Heart right ventricle (tissue), 16 donors: ENCODE measurements at regions of chr2 and their contacts with region 1.

Region 1: GRCh38 chr2:17672583-17673317 is 80.9 kb downstream of the SMC6 start:
- DNase-seq: no peak
- ATAC-seq: no peak
- H3K4me3 ChIP-seq: no peak overlapping the region
- H3K27ac ChIP-seq: no peak overlapping the region
- H3K4me1 ChIP-seq: no peaks in the 10 kb centered on the region
- H3K27me3 ChIP-seq: no peaks in the 10 kb centered on the region
- CTCF ChIP-seq: no peak

Region 2: GRCh38 chr2:16773080-16773713 is 899.6 kb before region 1 on chr2:
- intact Hi-C with region 1: loop called (anchors 2 to 10 kb)
- DNase-seq: peak in 1 of 2 donors; percentile 23
- ATAC-seq: peak in 4 of 8 donors; percentile 46 to 80 (median 56)
- H3K4me3 ChIP-seq: no peak overlapping the region
- H3K27ac ChIP-seq: no peak overlapping the region
- H3K4me1 ChIP-seq: no peaks in the 10 kb centered on the region
- H3K27me3 ChIP-seq: peaks cover 0 to 22% (median 0%) of the 10 kb centered on the region in 7 donors
- CTCF ChIP-seq: peak; percentile 28 to 67 (median 58)

Region 3: DNA sequence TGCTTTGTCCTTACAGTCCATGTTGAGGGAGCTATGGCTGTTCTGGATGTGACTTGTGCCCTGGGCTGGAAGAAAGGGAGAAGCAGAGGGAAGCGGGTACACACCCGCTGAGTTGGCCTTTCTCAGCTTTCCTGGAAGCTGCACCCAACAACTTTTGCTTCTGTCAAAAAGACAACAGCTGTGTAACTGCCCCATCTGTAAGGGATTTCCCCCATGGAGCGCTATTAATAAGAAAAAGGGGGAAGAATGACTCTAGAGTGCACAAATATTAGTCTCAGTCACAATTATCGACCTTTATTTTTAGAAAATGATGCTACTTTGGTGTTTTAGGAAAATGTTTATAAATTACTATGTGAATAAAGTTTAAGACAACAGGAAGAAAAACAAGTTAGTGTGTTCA is 522.8 kb before region 1 on chr2:
- intact Hi-C with region 1: loop called in 1 of 10 experiments (anchors 10 kb)
- DNase-seq: no peak
- ATAC-seq: no peak
- H3K4me3 ChIP-seq: no peak overlapping the region
- H3K27ac ChIP-seq: no peak overlapping the region
- H3K4me1 ChIP-seq: no peaks in the 10 kb centered on the region
- H3K27me3 ChIP-seq: peaks cover 0 to 3% (median 0%) of the 10 kb centered on the region in 7 donors
- CTCF ChIP-seq: no peak

Region 4: GRCh38 chr2:17309741-17310339 is 362.9 kb before region 1 on chr2:
- intact Hi-C with region 1: loop called in 1 of 10 experiments (anchors 10 kb)
- DNase-seq: peak in 1 of 2 donors; percentile 23
- ATAC-seq: peak in 2 of 8 donors; percentile 69 to 71
- H3K4me3 ChIP-seq: no peak overlapping the region
- H3K27ac ChIP-seq: no peak overlapping the region
- H3K4me1 ChIP-seq: peaks cover 0 to 3% (median 0%) of the 10 kb centered on the region in 9 donors
- H3K27me3 ChIP-seq: no peaks in the 10 kb centered on the region
- CTCF ChIP-seq: peak; percentile 28 to 75 (median 67)

Region 5: GRCh38 chr2:17470855-17471641 is 201.7 kb before region 1 on chr2:
- intact Hi-C with region 1: loop called in 2 of 10 experiments (anchors 10 kb)
- DNase-seq: no peak
- ATAC-seq: no peak
- H3K4me3 ChIP-seq: no peak overlapping the region
- H3K27ac ChIP-seq: no peak overlapping the region
- H3K4me1 ChIP-seq: peaks cover 0 to under 1% (median 0%) of the 10 kb centered on the region in 9 donors
- H3K27me3 ChIP-seq: no peaks in the 10 kb centered on the region
- CTCF ChIP-seq: peak in 4 of 9 donors; percentile 13 to 33 (median 18)

Region 6: DNA sequence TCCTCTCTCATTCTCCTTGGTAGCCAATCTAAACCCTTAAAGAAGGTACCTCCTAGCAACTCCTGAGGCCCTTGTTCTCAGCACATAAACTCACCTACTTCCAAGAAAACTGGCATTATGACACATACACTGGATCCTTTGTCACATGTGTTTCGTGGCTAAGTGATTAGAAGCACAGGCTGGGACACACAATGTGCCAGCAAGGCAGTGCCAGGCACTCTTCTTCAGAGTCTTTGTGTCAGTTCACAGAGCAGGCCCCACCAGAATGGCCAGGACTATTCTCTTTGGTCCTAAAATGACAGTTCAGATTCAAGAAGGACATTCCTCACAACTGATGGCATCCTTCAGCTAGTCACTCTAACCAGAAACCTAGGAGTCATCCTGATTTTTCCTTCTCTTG is 40.5 kb after region 1 on chr2:
- intact Hi-C with region 1: no loop called
- DNase-seq: no peak
- ATAC-seq: no peak
- H3K4me3 ChIP-seq: no peak overlapping the region
- H3K27ac ChIP-seq: no peak overlapping the region
- H3K4me1 ChIP-seq: peaks cover 0 to 8% (median 0%) of the 10 kb centered on the region in 9 donors
- H3K27me3 ChIP-seq: no peaks in the 10 kb centered on the region
- CTCF ChIP-seq: no peak

Region 7: DNA sequence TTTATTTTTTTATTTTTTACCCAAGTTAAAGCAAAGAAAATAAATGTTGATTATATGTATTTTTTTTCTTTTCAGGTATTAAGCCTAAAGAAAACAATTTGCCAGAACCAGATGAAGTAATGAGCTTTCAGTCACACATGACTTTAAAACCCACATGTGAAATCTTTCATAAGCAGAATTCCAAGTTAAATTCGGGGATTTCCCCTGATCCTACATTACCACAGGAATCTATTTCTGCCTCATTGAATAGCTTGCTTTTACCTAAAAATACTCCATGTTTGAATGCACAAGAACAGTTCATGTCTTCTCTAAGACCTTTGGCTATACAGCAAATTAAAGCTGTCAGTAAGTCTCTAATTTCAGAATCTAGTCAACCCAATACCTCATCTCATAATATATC is 107.8 kb after region 1 on chr2:
- intact Hi-C with region 1: no loop called
- DNase-seq: no peak
- ATAC-seq: no peak
- H3K4me3 ChIP-seq: no peak overlapping the region
- H3K27ac ChIP-seq: no peak overlapping the region
- H3K4me1 ChIP-seq: no peaks in the 10 kb centered on the region
- H3K27me3 ChIP-seq: no peaks in the 10 kb centered on the region
- CTCF ChIP-seq: no peak